Caco-2 (cell line): ENCODE measurements at regions of chr12 and their contacts with region 1.

Region 1: DNA sequence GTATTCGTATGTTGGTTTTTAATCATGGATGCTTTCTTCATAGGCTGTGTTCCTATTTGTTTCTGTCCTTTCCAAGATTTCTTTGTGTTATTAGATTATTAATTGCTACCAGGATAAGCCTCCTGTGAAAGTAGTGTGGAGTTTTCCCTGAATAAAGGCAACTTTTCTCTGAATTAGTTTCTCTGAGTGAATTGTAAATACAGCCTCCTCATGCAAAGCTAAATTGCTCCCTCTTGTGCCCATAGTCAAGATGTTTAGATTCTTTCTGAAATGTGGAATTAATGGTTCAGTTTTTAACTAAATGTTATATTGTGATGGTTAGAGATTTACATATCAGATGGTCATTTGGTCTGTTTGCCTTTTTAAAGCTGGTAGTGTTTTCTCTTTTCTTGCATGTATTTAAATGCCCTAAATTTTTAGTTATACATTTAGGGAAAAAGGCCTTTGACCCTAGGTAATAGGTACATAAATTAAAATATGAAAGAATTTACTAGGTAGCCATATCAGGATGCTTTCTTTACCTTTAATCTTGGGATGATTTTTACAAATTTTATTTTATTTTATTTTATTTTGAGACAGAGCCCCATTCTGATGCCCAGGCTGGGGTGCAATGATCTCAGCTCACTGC is 8.9 kb downstream of the APAF1 start:
- DNase-seq: peak in 1 of 2 experiments; percentile 46
- H3K4me3 ChIP-seq: no peak overlapping the region
- H3K4me3 Mint-ChIP-seq: no peak overlapping the region
- H3K27ac Mint-ChIP-seq: no peak overlapping the region
- H3K4me1 ChIP-seq: 0 out of 2 replicates have a peak, but pooled peaks cover 5% of the 10 kb centered on the region
- H3K4me1 Mint-ChIP-seq: peaks cover 7% of the 10 kb centered on the region
- H3K27me3 ChIP-seq: no peaks in the 10 kb centered on the region
- H3K27me3 Mint-ChIP-seq: no peaks in the 10 kb centered on the region
- CTCF ChIP-seq: peak; percentile 61 to 70

Region 2: DNA sequence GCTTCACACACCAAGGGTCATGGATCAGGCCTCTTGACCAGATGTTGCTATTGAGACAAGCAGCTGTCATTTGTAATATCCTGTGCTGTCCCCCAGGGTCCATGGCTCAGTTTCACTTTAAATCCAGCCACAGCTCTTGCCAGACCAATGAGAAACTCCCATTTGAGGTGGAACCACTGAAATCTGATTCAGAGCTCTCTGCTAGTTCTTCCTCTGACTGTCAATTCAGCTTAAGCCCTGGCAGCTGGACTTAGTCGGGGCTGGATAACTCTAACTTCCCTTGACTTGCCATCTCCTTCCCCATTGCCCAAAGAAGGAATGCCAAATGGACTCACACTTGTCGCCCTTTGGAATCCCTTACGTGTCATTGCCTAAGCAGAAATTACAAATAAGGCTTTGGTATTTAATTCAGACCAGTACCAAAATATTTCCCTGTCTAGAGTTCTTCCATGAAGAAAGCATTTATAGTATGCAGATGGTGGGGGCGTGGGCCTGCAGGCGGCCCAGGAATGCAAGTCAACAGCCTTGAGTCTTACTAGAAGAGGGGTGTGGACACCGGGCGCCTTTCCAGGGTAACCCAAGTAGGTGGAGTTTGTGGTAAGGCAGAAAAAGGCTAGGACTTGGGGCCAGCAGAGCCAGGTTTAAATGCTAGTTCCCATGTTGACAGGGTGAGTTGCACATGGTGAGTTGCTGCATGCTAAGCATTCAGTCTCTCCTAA is 235.5 kb before region 1 on chr12:
- CTCF ChIA-PET with region 1: interaction called, 3 read pairs
- POLR2A ChIA-PET with region 1: no interaction called
- intact Hi-C with region 1: loop called (anchors 1 kb)
- DNase-seq: peak; percentile 76 to 84
- H3K4me3 ChIP-seq: no peak overlapping the region
- H3K4me3 Mint-ChIP-seq: no peak overlapping the region
- H3K27ac Mint-ChIP-seq: peak overlapping the region; percentile 45
- H3K4me1 ChIP-seq: peaks cover 17% of the 10 kb centered on the region
- H3K4me1 Mint-ChIP-seq: peaks cover 28% of the 10 kb centered on the region
- H3K27me3 ChIP-seq: no peaks in the 10 kb centered on the region
- H3K27me3 Mint-ChIP-seq: no peaks in the 10 kb centered on the region
- CTCF ChIP-seq: no peak

Region 3: DNA sequence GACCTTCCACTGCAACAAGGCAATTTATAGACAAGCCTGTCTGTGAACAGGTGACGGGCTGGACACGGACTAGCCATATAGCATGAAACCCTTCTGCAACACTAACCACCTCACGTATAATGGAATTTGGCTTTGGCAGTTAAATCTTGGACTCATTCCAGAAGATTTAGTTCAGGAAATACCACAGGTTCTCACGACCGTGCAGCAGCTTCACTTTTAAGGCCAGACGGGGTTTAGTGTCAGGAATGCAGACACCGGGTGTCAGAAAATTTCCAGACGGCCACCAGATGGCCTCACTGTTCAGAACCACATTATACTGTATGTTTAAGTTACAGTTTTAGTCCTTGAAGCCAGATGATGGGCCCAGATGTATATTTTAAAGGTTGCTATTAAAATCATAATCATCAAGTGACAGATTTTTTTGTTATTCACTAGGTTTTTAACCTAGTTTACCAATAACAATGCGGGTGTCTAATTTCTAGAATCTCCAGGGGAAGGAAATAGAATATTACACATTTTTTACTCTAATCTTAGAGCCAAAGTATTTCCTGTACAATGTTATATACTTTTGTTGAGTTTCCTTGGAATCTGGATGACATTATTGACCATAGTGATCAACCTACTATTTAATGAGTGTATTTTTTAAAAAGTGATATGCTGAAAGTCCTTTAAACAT is 229.1 kb before region 1 on chr12:
- CTCF ChIA-PET with region 1: no interaction called
- POLR2A ChIA-PET with region 1: no interaction called
- intact Hi-C with region 1: loop called (anchors 1 kb)
- DNase-seq: peak; percentile 69 to 75
- H3K4me3 ChIP-seq: no peak overlapping the region
- H3K4me3 Mint-ChIP-seq: no peak overlapping the region
- H3K27ac Mint-ChIP-seq: no peak overlapping the region
- H3K4me1 ChIP-seq: peaks cover 6% of the 10 kb centered on the region; the same call in 1 of the 2 replicates
- H3K4me1 Mint-ChIP-seq: peaks cover 2% of the 10 kb centered on the region
- H3K27me3 ChIP-seq: no peaks in the 10 kb centered on the region
- H3K27me3 Mint-ChIP-seq: no peaks in the 10 kb centered on the region
- CTCF ChIP-seq: peak; percentile 75

Region 4: GRCh38 chr12:98532681-98533304 is 121.2 kb before region 1 on chr12:
- CTCF ChIA-PET with region 1: no interaction called
- POLR2A ChIA-PET with region 1: no interaction called
- intact Hi-C with region 1: loop called (anchors 5 kb)
- DNase-seq: peak in 1 of 2 experiments; percentile 77
- H3K4me3 ChIP-seq: no peak overlapping the region
- H3K4me3 Mint-ChIP-seq: no peak overlapping the region
- H3K27ac Mint-ChIP-seq: peak overlapping the region; percentile 69
- H3K4me1 ChIP-seq: peaks cover 19% of the 10 kb centered on the region
- H3K4me1 Mint-ChIP-seq: peaks cover 4% of the 10 kb centered on the region
- H3K27me3 ChIP-seq: no peaks in the 10 kb centered on the region
- H3K27me3 Mint-ChIP-seq: no peaks in the 10 kb centered on the region
- CTCF ChIP-seq: peak; percentile 62 to 75

Region 5: DNA sequence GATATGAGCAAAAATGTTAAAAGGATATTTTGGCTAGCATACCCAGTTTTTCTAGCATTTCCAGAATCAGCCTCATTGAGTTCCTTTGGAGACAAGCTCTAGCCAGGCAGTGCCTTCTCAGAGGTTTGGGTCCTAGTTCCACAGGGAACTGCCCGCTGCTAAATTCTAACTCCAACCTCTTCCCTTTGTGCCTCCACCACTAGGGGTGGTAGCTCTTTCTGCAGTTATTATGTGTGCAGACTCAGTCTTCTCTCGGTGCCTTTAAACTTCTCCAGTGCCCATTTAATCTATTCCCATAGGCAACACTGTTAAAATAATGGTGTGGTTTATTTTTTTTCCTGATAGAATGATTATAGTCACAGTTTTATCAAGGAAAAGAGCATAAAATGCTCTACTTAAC is 82.0 kb before region 1 on chr12:
- CTCF ChIA-PET with region 1: interaction called, 6 read pairs
- POLR2A ChIA-PET with region 1: no interaction called
- intact Hi-C with region 1: loop called (anchors 1 kb)
- DNase-seq: no peak
- H3K4me3 ChIP-seq: no peak overlapping the region
- H3K4me3 Mint-ChIP-seq: no peak overlapping the region
- H3K27ac Mint-ChIP-seq: no peak overlapping the region
- H3K4me1 ChIP-seq: peaks cover 44% of the 10 kb centered on the region
- H3K4me1 Mint-ChIP-seq: no peaks in the 10 kb centered on the region
- H3K27me3 ChIP-seq: no peaks in the 10 kb centered on the region
- H3K27me3 Mint-ChIP-seq: no peaks in the 10 kb centered on the region
- CTCF ChIP-seq: peak; percentile 19 to 27

Region 6: DNA sequence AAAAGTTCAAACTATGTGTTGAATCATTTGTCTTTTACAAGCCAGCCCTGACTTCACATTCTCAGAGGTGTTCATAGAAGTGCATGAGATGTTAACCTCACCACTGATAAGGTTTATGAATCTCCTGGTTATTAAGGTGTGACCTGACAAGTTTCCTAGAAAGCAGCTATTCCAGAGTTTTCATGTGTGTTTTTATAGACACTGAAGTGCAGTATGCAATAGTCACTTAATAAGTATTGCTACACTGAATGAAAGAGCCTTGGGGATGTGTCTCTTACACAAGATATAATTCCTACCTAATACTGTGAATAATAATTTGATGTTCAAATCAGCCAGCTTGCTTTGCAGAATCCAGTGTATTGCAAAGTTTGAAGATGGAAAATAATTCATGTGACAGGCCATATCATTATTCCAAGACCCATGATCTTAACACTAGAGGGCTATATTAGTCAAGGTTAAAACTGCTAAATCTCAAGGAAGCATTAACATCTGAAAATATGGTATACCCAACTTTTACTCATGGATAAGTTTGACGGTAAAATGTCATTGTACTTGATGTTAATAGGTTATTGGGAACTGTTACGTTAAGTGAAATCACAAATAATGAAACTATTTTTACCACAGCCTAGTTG is 47.5 kb before region 1 on chr12:
- CTCF ChIA-PET with region 1: no interaction called
- POLR2A ChIA-PET with region 1: no interaction called
- intact Hi-C with region 1: loop called (anchors 1 kb)
- DNase-seq: no peak
- H3K4me3 ChIP-seq: no peak overlapping the region
- H3K4me3 Mint-ChIP-seq: no peak overlapping the region
- H3K27ac Mint-ChIP-seq: no peak overlapping the region
- H3K4me1 ChIP-seq: no peaks in the 10 kb centered on the region
- H3K4me1 Mint-ChIP-seq: no peaks in the 10 kb centered on the region
- H3K27me3 ChIP-seq: no peaks in the 10 kb centered on the region
- H3K27me3 Mint-ChIP-seq: no peaks in the 10 kb centered on the region
- CTCF ChIP-seq: no peak

Region 7: GRCh38 chr12:98701166-98701565 is 47.2 kb after region 1 on chr12:
- CTCF ChIA-PET with region 1: no interaction called
- POLR2A ChIA-PET with region 1: no interaction called
- intact Hi-C with region 1: no loop called
- DNase-seq: no peak
- H3K4me3 ChIP-seq: no peak overlapping the region
- H3K4me3 Mint-ChIP-seq: no peak overlapping the region
- H3K27ac Mint-ChIP-seq: no peak overlapping the region
- H3K4me1 ChIP-seq: no peaks in the 10 kb centered on the region
- H3K4me1 Mint-ChIP-seq: no peaks in the 10 kb centered on the region
- H3K27me3 ChIP-seq: no peaks in the 10 kb centered on the region
- H3K27me3 Mint-ChIP-seq: no peaks in the 10 kb centered on the region
- CTCF ChIP-seq: no peak